HepG2 (cell line): ENCODE measurements at regions of chr12 and their contacts with region 1.

Region 1: DNA sequence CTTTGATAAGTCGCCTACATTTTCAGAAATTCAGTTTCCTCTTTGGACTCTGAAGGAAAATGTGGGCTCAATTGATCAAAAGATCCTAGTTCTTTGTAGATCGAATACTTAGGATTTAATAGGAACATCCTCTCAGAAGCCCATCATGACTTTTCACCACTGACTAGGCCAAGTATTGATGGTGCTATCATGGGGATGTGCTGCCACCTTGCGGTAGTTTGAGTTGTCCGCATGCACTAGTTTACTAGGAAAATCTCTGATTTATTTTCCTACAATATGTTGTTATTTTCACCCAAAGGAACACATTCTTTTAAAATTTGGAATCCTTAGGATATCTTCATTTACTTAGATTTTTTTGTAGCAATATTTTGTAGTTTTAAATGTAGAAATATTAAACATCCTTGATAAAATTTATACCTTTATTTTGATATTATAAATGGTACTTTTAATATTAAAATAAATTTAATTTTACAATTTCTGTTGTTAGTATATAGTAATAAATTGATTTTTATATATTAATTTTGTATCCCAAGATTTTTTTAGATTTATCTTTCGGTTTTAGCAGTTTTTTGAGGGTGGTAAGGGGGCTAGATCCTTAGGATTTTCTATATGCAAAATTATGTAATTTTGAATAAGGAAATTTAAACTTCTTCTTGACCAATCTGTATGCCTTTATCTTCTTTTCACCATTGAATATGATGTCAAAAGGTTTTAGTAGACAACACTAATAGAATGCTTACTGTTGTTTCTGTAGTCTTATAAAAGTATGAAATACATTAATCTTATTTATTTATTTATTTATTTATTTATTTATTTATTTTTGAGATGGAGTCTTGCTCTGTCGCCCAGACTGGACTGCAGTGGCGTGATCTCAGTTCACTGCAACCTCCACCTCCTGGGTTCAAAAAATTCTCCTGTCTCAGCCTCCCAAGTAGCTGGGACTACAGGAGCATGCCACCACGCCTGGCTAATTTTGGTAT is 52.9 kb upstream of the OR9K2 start:
- DNase-seq: peak; percentile 48
- ATAC-seq: peak; percentile 82
- H3K4me3 ChIP-seq: no peak overlapping the region
- H3K27ac ChIP-seq: no peak overlapping the region
- H3K4me1 ChIP-seq: no peaks in the 10 kb centered on the region
- H3K27me3 ChIP-seq: peaks cover 0 to 3% of the 10 kb centered on the region in 2 experiments; a peak in 1 of 5 replicates
- CTCF ChIP-seq: peak; percentile 80
- EP300 ChIP-seq: no peak
- POLR2A ChIP-seq: no peak
- RAD21 ChIP-seq: peak; percentile 50; the same call in 1 of the 2 replicates

Region 2: GRCh38 chr12:54759751-54760150 is 313.6 kb before region 1 on chr12:
- CTCF ChIA-PET with region 1: no interaction called
- POLR2A ChIA-PET with region 1: no interaction called
- in situ Hi-C with region 1: loop called (anchors 25 kb)
- intact Hi-C with region 1: loop called (anchors 10 kb)
- DNase-seq: peak; percentile 38
- ATAC-seq: peak; percentile 74
- H3K4me3 ChIP-seq: no peak overlapping the region
- H3K27ac ChIP-seq: no peak overlapping the region
- H3K4me1 ChIP-seq: no peaks in the 10 kb centered on the region
- H3K27me3 ChIP-seq: no peaks in the 10 kb centered on the region
- CTCF ChIP-seq: peak; percentile 60
- EP300 ChIP-seq: no peak
- POLR2A ChIP-seq: no peak
- RAD21 ChIP-seq: peak; percentile 34; the same call in 1 of the 2 replicates

Region 3: DNA sequence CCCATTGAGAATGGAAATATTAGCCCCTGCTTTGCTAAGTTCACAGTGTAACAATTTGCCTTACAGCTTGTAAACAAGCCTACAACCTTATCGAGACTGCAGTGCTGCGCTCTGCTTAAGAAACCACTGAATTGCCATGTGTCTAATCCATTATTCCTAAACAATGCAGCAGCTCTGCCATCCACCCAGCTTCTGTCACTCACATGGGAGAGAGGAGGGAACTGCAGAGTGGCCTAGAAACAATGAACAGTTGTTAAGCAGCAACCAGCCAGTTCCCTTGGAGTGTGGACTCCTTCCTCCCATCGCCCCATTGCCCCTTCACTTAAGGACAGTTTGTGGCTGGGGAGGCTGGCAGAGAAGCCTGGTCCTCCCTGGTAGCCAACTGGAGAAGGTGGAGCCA is 131.7 kb before region 1 on chr12:
- CTCF ChIA-PET with region 1: no interaction called
- POLR2A ChIA-PET with region 1: no interaction called
- in situ Hi-C with region 1: no loop called
- intact Hi-C with region 1: no loop called
- DNase-seq: no peak
- ATAC-seq: no peak
- H3K4me3 ChIP-seq: no peak overlapping the region
- H3K27ac ChIP-seq: no peak overlapping the region
- H3K4me1 ChIP-seq: no peaks in the 10 kb centered on the region
- H3K27me3 ChIP-seq: peaks cover 1 to 7% of the 10 kb centered on the region in 2 experiments; a peak in 2 of 5 replicates
- CTCF ChIP-seq: no peak
- EP300 ChIP-seq: no peak
- POLR2A ChIP-seq: no peak
- RAD21 ChIP-seq: no peak

Region 4: DNA sequence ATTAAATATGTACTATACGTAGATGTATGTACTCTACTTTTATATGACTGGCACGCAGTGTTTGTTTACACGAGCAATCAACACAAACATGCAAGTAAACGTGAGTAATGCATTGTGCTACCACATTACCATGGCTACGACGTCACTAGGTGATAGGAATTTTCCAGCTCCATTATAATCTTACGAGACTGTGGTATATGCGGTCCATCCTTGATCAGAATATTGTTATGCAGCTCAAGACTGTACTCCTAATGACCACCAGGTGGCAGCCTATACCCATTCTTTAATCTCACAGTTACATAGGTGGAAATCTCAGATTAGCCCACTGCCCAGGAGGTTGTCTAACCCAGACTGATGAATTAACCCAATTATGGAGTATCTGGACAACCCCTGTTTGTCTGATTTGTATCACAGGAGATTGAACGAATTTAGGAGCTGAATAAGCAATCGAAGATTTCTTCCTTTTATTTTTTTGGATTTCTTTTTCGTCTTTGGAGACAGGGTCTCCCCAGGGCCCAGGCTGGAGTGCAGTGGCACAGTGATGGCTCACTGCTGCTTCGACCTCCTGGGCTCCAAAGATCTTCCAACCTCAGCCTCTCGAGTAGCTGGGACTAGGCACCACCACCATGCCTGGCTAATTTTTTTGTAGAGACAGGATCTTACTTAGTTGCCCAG is 80.0 kb before region 1 on chr12:
- CTCF ChIA-PET with region 1: interaction called, 64 read pairs
- POLR2A ChIA-PET with region 1: no interaction called
- in situ Hi-C with region 1: loop called (anchors 5 kb)
- intact Hi-C with region 1: loop called (anchors 1 kb)
- DNase-seq: peak; percentile 59
- ATAC-seq: peak; percentile 89
- H3K4me3 ChIP-seq: no peak overlapping the region
- H3K27ac ChIP-seq: no peak overlapping the region
- H3K4me1 ChIP-seq: no peaks in the 10 kb centered on the region
- H3K27me3 ChIP-seq: peaks cover 0 to 9% of the 10 kb centered on the region in 2 experiments; a peak in 1 of 5 replicates
- CTCF ChIP-seq: peak; percentile 83
- EP300 ChIP-seq: no peak
- POLR2A ChIP-seq: no peak
- RAD21 ChIP-seq: peak; percentile 42; the same call in 1 of the 2 replicates

Region 5: GRCh38 chr12:55043542-55043941 is 29.8 kb before region 1 on chr12:
- CTCF ChIA-PET with region 1: no interaction called
- POLR2A ChIA-PET with region 1: no interaction called
- in situ Hi-C with region 1: no loop called
- intact Hi-C with region 1: no loop called
- DNase-seq: no peak
- ATAC-seq: no peak
- H3K4me3 ChIP-seq: no peak overlapping the region
- H3K27ac ChIP-seq: no peak overlapping the region
- H3K4me1 ChIP-seq: no peaks in the 10 kb centered on the region
- H3K27me3 ChIP-seq: peaks cover 1 to 16% of the 10 kb centered on the region in 2 experiments; a peak in 3 of 5 replicates
- CTCF ChIP-seq: no peak
- EP300 ChIP-seq: no peak
- POLR2A ChIP-seq: no peak
- RAD21 ChIP-seq: no peak

Region 6: GRCh38 chr12:55296469-55296868 is 223.1 kb after region 1 on chr12 and contains the start of gene OR6C6:
- CTCF ChIA-PET with region 1: no interaction called
- POLR2A ChIA-PET with region 1: no interaction called
- in situ Hi-C with region 1: no loop called
- intact Hi-C with region 1: no loop called
- DNase-seq: no peak
- ATAC-seq: no peak
- H3K4me3 ChIP-seq: no peak within 1 kb of the TSS
- H3K27ac ChIP-seq: no peak within 1 kb of the TSS
- H3K4me1 ChIP-seq: no peaks in the 10 kb centered on the region
- H3K27me3 ChIP-seq: no peaks in the 10 kb centered on the region
- CTCF ChIP-seq: no peak
- EP300 ChIP-seq: no peak
- POLR2A ChIP-seq: no peak
- RAD21 ChIP-seq: no peak
- total RNA-seq, gene OR6C6: not detected in 2 replicates